ENCODE measurements at regions of chr3 and their contacts with region 1.

Region 1: DNA sequence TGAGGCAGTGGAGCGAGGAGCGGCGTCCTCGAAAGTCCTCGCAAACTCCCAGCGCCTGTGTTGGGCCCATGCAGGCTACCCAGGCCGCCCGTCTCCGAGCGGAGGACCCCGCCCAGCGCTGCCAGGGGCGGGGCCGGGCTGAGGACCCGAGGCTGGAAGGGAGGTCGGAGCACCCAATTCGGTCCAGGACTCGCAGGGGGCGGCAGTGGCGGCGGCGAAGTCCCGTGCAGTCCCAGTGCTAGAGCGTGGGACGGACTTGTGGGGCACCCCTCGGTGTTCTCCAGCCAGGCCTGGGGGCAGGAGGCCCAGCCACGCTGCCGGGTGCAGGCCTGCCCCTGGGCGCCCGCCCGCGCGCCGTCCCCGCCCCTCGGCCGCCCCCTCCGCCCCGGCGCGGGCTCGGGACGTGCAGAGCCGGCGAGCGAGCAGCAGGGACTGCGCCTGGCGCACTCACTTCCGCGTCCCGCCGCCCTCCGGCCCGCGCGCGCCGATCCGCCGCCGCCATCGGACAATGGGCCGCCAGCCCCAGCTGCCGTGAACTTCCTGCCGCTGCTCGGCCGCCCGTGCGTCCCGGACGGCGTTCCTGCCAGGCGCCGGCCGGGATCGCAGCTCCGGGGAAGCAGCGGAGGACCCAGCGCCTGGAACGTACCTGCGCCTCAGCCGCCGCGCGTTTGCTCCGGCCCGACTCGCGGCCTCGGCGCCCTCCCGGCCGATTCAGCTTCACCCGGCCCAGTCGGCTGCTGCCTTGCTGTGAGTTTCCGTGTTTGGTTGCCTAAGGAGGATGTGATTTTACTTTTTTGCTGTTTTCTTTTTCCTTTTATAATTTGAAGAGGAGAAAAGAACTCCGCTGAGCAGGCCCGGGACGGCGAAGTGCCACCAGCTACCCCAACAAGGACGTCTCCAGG is 592 bp upstream of the LIMD1 start:
- DNase-seq: peak; percentile 76
- H3K4me3 Mint-ChIP-seq: peak overlapping the region; percentile 89
- H3K27ac Mint-ChIP-seq: peak overlapping the region; percentile 87
- H3K4me1 Mint-ChIP-seq: peaks cover 52% of the 10 kb centered on the region
- H3K27me3 Mint-ChIP-seq: peaks cover 6% of the 10 kb centered on the region

Region 2: GRCh38 chr3:45528429-45528828 is 65.5 kb before region 1 on chr3:
- intact Hi-C with region 1: loop called (anchors 2 kb)
- DNase-seq: no peak
- H3K4me3 Mint-ChIP-seq: no peak overlapping the region
- H3K27ac Mint-ChIP-seq: peak overlapping the region; percentile 67
- H3K4me1 Mint-ChIP-seq: peaks cover 11% of the 10 kb centered on the region
- H3K27me3 Mint-ChIP-seq: no peaks in the 10 kb centered on the region

Region 3: GRCh38 chr3:45567730-45568172 is 26.2 kb before region 1 on chr3:
- intact Hi-C with region 1: loop called (anchors 2 kb)
- DNase-seq: peak; percentile 41
- H3K4me3 Mint-ChIP-seq: peak overlapping the region; percentile 59
- H3K27ac Mint-ChIP-seq: peak overlapping the region; percentile 84
- H3K4me1 Mint-ChIP-seq: peaks cover 71% of the 10 kb centered on the region
- H3K27me3 Mint-ChIP-seq: peaks cover 9% of the 10 kb centered on the region

Region 4: GRCh38 chr3:45612918-45613602 is 19.1 kb after region 1 on chr3:
- intact Hi-C with region 1: loop called (anchors 2 kb)
- DNase-seq: no peak
- H3K4me3 Mint-ChIP-seq: no peak overlapping the region
- H3K27ac Mint-ChIP-seq: peak overlapping the region; percentile 42
- H3K4me1 Mint-ChIP-seq: peaks cover 51% of the 10 kb centered on the region
- H3K27me3 Mint-ChIP-seq: no peaks in the 10 kb centered on the region

Region 5: GRCh38 chr3:45635477-45636256 is 41.7 kb after region 1 on chr3:
- intact Hi-C with region 1: no loop called
- DNase-seq: no peak
- H3K4me3 Mint-ChIP-seq: no peak overlapping the region
- H3K27ac Mint-ChIP-seq: no peak overlapping the region
- H3K4me1 Mint-ChIP-seq: peaks cover 14% of the 10 kb centered on the region
- H3K27me3 Mint-ChIP-seq: no peaks in the 10 kb centered on the region

Region 6: GRCh38 chr3:45656575-45657363 is 62.8 kb after region 1 on chr3:
- intact Hi-C with region 1: loop called (anchors 1 kb)
- DNase-seq: peak; percentile 72
- H3K4me3 Mint-ChIP-seq: no peak overlapping the region
- H3K27ac Mint-ChIP-seq: no peak overlapping the region
- H3K4me1 Mint-ChIP-seq: peaks cover 12% of the 10 kb centered on the region
- H3K27me3 Mint-ChIP-seq: no peaks in the 10 kb centered on the region

Region 7: GRCh38 chr3:45665101-45665572 is 71.2 kb after region 1 on chr3:
- intact Hi-C with region 1: loop called (anchors 2 kb)
- DNase-seq: peak; percentile 34
- H3K4me3 Mint-ChIP-seq: peak overlapping the region; percentile 83
- H3K27ac Mint-ChIP-seq: peak overlapping the region; percentile 86
- H3K4me1 Mint-ChIP-seq: peaks cover 53% of the 10 kb centered on the region
- H3K27me3 Mint-ChIP-seq: no peaks in the 10 kb centered on the region

Region 8: GRCh38 chr3:46078712-46079400 is 484.9 kb after region 1 on chr3:
- intact Hi-C with region 1: loop called (anchors 10 kb)
- DNase-seq: peak; percentile 82
- H3K4me3 Mint-ChIP-seq: no peak overlapping the region
- H3K27ac Mint-ChIP-seq: no peak overlapping the region
- H3K4me1 Mint-ChIP-seq: peaks cover 74% of the 10 kb centered on the region
- H3K27me3 Mint-ChIP-seq: peaks cover 7% of the 10 kb centered on the region

Measured in activated T-helper 1 cell treated with anti-CD3 and anti-CD28 coated beads, Interleukin-12 subunit alpha, Interleukin-12 subunit beta, Interleukin-2, Interleukin-4 antibody, amounts not matched to agents 30 ng/mL and 10 ng/mL and 1 ng/mL, durations not matched to agents 14 hours and 24 hours and 36 hours (primary cell).